Activated CD4-positive, alpha-beta memory T cell treated with anti-CD3 and anti-CD28 coated beads for 36 hours (primary cell): ENCODE measurements at regions of chr14 and their contacts with region 1.

Region 1: GRCh38 chr14:22519877-22520685 is 68.9 kb downstream of the DAD1 start:
- DNase-seq: no peak
- H3K4me3 Mint-ChIP-seq: peak overlapping the region; percentile 83
- H3K27ac Mint-ChIP-seq: peak overlapping the region; percentile 99
- H3K4me1 Mint-ChIP-seq: peaks cover 88% of the 10 kb centered on the region
- H3K27me3 Mint-ChIP-seq: no peaks in the 10 kb centered on the region

Region 2: GRCh38 chr14:22491683-22492621 is 28.1 kb before region 1 on chr14:
- CTCF ChIA-PET with region 1: no interaction called
- POLR2A ChIA-PET with region 1: interaction called, 639 read pairs
- intact Hi-C with region 1: no loop called
- DNase-seq: peak; percentile 56
- H3K4me3 Mint-ChIP-seq: peak overlapping the region; percentile 87
- H3K27ac Mint-ChIP-seq: peak overlapping the region; percentile 98
- H3K4me1 Mint-ChIP-seq: peaks cover 2% of the 10 kb centered on the region
- H3K27me3 Mint-ChIP-seq: no peaks in the 10 kb centered on the region

Region 3: GRCh38 chr14:22531451-22532344 is 11.6 kb after region 1 on chr14:
- CTCF ChIA-PET with region 1: interaction called, 8 read pairs
- POLR2A ChIA-PET with region 1: interaction called, 584 read pairs
- intact Hi-C with region 1: loop called (anchors 1 kb)
- DNase-seq: peak; percentile 66
- H3K4me3 Mint-ChIP-seq: peak overlapping the region; percentile 74
- H3K27ac Mint-ChIP-seq: peak overlapping the region; percentile 99
- H3K4me1 Mint-ChIP-seq: peaks cover 88% of the 10 kb centered on the region
- H3K27me3 Mint-ChIP-seq: no peaks in the 10 kb centered on the region

Region 4: GRCh38 chr14:22536853-22537338 is 16.8 kb after region 1 on chr14:
- CTCF ChIA-PET with region 1: interaction called, 7 read pairs
- POLR2A ChIA-PET with region 1: interaction called, 584 read pairs
- intact Hi-C with region 1: loop called (anchors 1 kb)
- DNase-seq: peak; percentile 92
- H3K4me3 Mint-ChIP-seq: peak overlapping the region; percentile 81
- H3K27ac Mint-ChIP-seq: peak overlapping the region; percentile 99
- H3K4me1 Mint-ChIP-seq: peaks cover 95% of the 10 kb centered on the region
- H3K27me3 Mint-ChIP-seq: no peaks in the 10 kb centered on the region